GM13977 (cell line): ENCODE measurements at regions of chr2 and their contacts with region 1.

Region 1: DNA sequence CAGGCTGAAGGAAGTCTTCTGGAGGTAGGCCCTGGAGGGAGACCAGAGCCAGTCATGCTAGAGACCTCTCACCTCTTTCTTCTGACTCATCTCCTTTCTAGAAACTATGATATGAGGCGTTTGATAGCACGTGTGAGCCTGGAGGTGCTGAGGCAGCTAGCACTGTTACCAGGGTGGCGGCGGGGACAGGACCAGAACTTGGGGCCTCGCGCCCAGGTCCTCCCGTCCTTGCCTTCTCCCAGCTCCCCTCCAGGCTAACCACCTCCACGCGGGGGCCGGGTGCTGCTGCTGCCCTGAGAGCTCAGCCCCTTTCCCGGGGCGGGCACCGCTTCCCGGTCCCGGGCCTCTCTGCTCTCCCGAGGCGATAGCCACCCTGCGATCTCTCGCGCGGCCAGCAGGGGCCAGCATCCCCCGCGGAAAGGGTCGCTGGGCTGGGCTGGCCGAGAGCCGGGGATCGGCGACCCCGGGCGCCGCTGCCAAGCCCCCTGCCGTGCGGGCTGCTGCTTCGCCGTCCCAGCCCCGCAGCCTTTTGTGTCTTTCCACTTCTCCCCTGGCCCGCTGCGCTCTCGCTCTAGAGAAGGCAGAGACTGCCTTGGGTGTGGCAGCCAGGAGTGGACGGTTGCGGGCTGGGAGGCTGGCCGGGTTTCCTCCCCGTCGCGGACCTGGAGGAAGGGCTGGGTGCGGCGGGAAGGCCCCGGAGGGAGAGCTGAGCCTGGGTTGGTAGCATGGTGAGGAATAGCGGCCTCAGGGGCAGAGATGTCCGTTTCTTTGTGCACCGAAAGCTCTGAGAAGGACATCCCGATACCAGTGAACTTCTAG is 49.1 kb downstream of the TMEM17 start:
- DNase-seq: peak; percentile 87
- CTCF ChIP-seq: peak; percentile 97

Region 2: GRCh38 chr2:62913311-62913710 is 456.4 kb after region 1 on chr2:
- in situ Hi-C with region 1: no loop called
- DNase-seq: no peak
- CTCF ChIP-seq: no peak

Region 3: DNA sequence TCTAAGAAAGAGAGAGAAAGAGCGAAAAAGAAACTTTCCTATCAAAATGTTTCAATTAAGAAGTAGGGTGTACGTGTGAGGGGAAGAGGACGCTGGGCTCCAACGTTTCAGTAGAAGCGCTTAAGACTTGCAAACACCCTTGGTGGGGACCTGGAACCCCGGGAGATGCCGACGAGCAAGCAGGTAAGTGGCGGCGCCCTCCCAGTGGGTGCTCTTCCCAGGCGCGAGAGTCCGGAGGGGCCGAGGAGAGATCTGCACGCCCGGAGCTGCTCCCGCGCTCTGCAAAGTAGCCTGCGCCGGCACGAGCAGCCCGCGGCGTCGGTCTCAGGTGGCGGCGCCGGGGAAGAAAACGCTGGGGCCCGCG is 593.0 kb after region 1 on chr2:
- in situ Hi-C with region 1: loop called (anchors 25 kb)
- DNase-seq: no peak
- CTCF ChIP-seq: no peak